Activated CD4-positive, alpha-beta memory T cell treated with anti-CD3 and anti-CD28 coated beads for 36 hours (primary cell): ENCODE measurements at regions of chr10 and their contacts with region 1.

Region 1: DNA sequence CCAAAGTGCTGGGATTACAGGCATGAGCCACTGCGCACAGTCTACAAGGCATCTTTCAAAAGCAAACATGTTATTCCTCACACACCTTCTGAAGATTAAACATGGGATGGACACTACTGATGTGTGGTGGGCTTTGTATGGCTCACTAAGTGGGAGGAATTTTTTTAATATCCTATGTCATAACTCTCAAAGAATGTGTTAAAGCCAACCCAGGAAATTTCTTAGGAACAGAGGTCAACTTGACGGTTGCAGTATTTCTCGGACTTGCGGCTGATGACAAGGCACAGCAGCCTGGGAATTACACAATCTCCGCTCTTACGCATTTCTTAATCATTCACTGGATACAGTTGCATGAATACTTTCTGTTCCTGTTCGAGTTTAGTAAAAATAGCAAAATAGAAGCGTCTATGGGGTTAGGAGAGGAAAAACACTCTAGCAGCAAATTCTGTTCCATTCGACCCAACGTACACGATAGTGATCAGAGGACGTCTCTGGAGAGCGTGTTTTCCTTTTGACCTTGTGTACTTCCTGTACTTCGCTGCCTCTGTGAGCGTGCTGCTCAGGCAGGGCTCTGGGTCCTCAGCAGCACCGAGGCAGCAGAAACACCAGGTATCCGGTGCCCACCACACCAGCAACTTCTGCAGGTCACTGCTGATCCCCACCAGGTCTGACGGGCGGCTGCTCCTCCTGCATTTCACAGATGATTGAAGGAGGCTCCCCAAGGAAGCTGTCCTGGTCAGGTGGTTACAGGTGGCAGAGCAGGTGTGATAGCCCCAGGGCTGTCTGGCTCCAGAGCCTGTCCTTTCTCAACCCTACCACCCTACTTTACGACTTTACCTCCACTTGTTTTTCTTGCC is 26.4 kb upstream of the SRGN start:
- DNase-seq: peak; percentile 49
- H3K4me3 Mint-ChIP-seq: peak overlapping the region; percentile 61
- H3K27ac Mint-ChIP-seq: peak overlapping the region; percentile 70
- H3K4me1 Mint-ChIP-seq: peaks cover 62% of the 10 kb centered on the region
- H3K27me3 Mint-ChIP-seq: no peaks in the 10 kb centered on the region

Region 2: GRCh38 chr10:68997211-68997610 is 64.3 kb before region 1 on chr10:
- CTCF ChIA-PET with region 1: no interaction called
- POLR2A ChIA-PET with region 1: no interaction called
- intact Hi-C with region 1: loop called (anchors 2 kb)
- DNase-seq: peak; percentile 33
- H3K4me3 Mint-ChIP-seq: peak overlapping the region; percentile 40
- H3K27ac Mint-ChIP-seq: peak overlapping the region; percentile 94
- H3K4me1 Mint-ChIP-seq: peaks cover 52% of the 10 kb centered on the region
- H3K27me3 Mint-ChIP-seq: no peaks in the 10 kb centered on the region

Region 3: DNA sequence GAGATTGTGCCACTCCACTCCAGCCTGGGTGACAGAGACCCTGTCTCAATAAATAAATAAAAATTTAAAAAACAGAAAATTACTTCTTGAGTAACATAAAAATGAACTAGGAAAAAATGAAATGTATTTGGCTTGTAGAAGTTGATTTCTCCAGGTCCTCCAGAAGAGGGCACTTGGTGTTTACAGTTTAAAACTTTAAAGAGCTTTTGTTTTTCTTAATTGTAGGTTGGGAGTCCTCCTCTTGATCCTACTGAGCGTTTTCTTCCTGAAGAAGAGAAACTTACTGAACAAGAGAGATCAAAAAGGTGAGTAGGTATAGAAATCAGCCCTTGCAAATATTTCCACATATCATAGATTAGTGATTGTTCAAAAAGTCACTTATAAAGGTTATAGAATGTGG is 56.7 kb before region 1 on chr10:
- CTCF ChIA-PET with region 1: interaction called, 14 read pairs
- POLR2A ChIA-PET with region 1: interaction called, 3 read pairs
- intact Hi-C with region 1: no loop called
- DNase-seq: no peak
- H3K4me3 Mint-ChIP-seq: no peak overlapping the region
- H3K27ac Mint-ChIP-seq: no peak overlapping the region
- H3K4me1 Mint-ChIP-seq: peaks cover 15% of the 10 kb centered on the region
- H3K27me3 Mint-ChIP-seq: no peaks in the 10 kb centered on the region

Region 4: DNA sequence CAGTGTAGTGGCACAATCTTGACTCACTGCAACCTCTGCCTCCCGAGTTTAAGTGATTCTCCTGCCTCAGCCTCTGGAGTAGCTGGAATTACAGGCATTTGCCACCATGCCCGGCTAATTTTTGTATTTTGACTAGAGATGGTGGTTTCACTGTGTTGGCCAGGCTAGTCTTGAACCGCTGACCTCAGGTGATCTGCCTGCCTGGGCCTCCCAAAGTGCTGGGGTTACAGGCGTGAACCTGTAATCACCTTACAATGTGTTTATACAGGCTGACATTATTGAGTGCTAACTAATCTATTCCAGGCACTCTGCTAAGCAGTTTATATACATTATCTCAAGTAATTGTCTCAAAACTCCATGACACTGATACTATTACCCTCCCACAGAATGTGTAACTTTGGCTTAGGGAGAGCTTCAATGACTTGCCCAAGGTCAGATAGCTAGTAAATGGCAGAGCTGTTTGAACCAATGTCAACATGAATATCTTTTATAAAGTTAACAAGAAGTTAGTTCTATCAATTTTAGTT is 36.1 kb before region 1 on chr10:
- CTCF ChIA-PET with region 1: interaction called, 3 read pairs
- POLR2A ChIA-PET with region 1: no interaction called
- intact Hi-C with region 1: loop called (anchors 1 kb)
- DNase-seq: no peak
- H3K4me3 Mint-ChIP-seq: no peak overlapping the region
- H3K27ac Mint-ChIP-seq: no peak overlapping the region
- H3K4me1 Mint-ChIP-seq: peaks cover 15% of the 10 kb centered on the region
- H3K27me3 Mint-ChIP-seq: no peaks in the 10 kb centered on the region

Region 5: GRCh38 chr10:69101451-69102095 is 40.0 kb after region 1 on chr10:
- CTCF ChIA-PET with region 1: no interaction called
- POLR2A ChIA-PET with region 1: no interaction called
- intact Hi-C with region 1: no loop called
- DNase-seq: peak; percentile 56
- H3K4me3 Mint-ChIP-seq: no peak overlapping the region
- H3K27ac Mint-ChIP-seq: peak overlapping the region; percentile 76
- H3K4me1 Mint-ChIP-seq: peaks cover 46% of the 10 kb centered on the region
- H3K27me3 Mint-ChIP-seq: no peaks in the 10 kb centered on the region